ENCODE measurements at regions of chr11 and their contacts with region 1.

Region 1: DNA sequence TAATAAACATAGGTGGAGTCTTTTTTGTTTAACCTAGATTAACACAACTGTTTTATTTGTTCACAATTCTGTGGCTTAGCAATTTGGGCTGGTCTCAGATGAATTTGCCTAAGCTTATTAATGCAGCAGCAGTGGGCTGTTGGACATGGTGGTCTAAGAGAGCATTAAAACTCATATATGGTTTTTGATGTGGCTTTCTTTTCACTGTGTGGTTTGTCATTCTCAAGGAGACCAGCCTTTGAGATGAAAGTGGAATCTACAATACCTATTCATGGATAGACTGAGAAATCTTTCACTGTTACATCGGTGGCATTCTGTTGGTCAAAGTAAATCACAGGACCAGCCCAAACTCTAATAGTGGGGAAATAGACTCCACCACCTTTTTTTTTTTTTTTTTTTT is 39.6 kb downstream of the CUL5 start:
- DNase-seq: no peak

Region 2: DNA sequence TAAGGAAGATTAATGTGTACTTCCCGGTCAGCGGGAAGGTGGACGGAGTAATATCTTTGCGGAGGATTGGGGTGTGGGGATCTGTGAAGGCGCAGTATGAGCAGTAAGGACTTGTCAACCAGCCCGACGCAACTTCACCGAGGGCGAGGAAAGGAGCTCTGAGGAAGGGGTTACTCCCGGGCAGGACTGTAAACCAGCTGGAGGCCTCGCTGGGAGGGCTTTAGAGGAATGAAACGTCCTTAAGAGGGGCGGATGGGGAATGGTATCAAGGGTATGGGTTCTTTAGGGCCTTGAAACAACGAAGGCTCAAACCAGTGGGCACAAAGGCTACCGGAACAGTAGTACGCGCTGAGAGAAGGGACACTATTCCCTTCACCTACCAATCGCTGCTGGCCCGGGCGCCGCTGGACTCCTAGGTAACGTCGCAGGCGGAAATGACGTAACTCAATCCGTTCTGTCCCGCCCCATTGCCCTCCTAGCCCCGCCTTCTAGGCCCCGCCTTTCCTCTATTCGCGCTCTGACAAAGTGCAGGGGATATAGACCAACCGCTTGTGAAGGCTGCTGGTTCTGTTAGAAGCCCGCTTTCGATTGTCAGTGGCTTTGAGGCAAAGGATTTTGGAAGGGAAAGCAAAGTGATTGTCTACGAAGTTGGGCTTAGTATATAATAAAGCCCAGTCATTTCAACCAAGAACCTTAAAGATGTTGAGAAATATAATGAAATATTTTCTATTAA is 419.0 kb after region 1 on chr11 and contains the start of gene C11orf65:
- intact Hi-C with region 1: loop called in 1 of 2 experiments (anchors 10 kb)
- DNase-seq: peak; percentile 98
- total RNA-seq, gene C11orf65: 0.19 to 0.38 TPM